GM13977 (cell line): ENCODE measurements at regions of chr1 and their contacts with region 1.

Region 1: DNA sequence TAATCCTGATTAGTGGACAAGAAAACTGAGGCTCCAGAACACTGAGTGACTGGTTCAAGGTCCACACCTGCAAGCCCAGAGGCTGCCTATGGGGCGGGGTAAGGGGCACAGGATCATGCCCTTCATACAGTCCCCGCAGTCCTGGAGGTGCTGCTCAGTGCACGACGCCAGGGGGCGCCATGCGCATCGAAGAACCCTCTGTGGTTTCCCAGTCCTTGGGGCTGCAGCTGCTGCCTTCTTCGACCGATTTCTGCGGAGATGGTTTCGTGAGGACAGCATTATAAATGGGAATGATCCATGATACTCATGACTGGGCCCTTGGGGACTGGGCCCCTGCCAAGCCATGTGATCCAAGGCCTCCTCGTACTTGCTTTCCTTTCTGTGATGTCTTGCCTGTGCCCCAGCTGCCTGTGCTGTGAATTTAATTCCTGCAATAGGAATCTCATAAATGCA is 37.1 kb upstream of the ARHGEF10L start:
- DNase-seq: peak; percentile 78
- CTCF ChIP-seq: peak; percentile 92

Region 2: DNA sequence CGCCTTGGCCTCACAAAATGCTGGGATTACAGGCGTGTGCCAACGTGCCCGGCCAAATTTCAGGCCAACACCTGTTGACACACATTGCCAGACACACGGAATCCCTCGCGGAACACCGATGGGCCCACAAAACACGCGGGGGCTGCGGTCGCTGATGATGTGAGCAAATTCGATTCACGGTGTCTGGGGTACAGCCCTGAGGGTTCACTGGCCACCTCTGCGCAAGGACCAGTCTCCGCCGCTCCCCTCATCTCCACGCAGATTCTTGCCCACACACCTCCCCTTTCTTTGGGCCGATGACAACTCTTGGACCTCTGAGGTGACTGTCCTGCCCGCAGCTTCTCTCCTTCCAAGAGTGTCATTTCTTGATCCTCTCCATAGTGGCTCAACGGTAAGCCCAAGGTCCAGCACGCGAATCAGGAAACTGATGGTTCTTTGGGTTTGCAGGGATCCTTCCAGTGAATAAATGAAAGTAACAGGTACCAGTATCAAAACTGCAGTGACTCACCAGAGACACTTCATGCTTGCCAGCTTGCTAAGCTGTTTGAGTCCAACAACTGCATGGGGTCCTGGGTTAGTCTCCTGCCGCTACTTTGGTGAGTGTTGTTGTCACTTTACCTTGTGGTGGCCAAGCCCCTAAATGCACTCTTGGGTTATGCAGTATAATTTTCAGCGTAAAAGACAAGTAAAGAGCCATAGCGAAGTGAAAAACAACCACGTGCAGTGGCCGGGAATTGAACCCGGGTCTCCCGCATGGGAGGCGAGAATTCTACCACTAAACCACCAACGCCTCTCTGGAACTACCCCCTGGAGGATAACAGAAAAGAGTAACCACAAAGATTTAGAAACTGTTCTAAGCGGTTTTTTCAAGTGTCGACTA is 824.6 kb before region 1 on chr1:
- in situ Hi-C with region 1: no loop called
- DNase-seq: peak; percentile 25
- CTCF ChIP-seq: no peak

Region 3: DNA sequence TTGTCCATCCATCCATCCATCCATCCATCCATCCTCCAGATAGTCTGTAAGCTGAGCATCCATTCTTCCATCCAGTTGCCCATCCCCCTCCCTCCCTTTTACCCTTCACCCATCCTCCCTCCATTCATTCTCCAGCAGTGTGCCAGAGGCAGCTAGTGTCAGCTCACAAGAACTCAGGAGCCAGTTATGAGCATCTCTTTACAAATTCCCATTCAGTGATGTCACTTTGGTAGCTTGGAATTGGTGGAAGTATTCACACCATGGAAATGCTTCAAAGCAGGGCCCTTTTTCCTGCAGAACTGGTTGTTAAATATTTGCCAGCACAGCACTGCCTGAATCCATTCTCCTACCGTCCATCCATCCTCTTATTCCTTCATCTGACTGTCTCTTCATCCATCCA is 109.6 kb after region 1 on chr1:
- in situ Hi-C with region 1: loop called (anchors 5 kb)
- DNase-seq: no peak
- CTCF ChIP-seq: no peak